ENCODE measurements at regions of chr10 and their contacts with region 1.

Region 1: GRCh38 chr10:128011175-128011979 is 104.5 kb downstream of the PTPRE start:
- DNase-seq: peak; percentile 67 to 95 (median 86)

Region 2: DNA sequence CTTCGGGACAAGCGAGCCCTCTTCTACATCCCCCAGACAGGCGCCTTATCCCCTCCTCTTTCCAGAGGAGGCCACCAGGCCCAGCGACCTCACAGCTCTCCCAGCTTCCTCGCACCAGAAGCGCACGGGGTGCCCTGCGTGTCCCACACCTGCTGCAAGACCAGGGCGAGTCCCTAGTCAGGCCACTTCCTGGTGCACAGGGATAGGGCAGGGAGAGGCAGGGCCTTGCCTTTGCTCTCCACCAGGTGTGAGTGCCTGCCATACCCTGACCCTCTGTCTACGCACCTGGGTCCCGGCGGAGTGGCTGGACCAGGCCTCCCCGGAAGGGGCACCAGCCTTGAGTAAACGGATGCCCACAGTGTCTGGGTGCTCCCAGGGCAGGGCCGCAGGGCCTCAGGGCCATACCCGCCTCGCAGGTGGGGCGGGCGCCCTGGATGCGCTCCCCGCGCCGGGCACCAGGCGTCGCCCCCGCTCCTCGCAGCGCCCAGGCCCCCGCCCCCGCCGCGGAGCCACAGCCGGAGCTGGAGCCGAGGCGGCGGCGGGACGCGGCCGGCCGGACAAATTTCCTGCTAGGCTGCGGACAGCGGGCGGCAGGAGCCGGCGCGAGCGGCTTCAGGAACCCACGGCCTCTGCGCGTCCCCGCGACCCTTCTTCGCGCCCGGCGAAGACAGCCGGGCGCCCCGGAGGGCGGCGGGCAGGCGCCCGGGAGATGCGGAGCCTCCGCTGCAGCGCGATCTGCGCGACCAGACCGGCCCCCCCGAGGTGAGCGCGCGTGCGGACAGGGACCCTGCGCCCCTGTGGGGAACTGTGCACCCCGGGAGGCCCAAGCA is 104.6 kb before region 1 on chr10 and contains the start of gene PTPRE:
- intact Hi-C with region 1: loop called (anchors 2 kb)
- DNase-seq: peak in 40 of 42 donors; percentile 47 to 86 (median 71)

Region 3: DNA sequence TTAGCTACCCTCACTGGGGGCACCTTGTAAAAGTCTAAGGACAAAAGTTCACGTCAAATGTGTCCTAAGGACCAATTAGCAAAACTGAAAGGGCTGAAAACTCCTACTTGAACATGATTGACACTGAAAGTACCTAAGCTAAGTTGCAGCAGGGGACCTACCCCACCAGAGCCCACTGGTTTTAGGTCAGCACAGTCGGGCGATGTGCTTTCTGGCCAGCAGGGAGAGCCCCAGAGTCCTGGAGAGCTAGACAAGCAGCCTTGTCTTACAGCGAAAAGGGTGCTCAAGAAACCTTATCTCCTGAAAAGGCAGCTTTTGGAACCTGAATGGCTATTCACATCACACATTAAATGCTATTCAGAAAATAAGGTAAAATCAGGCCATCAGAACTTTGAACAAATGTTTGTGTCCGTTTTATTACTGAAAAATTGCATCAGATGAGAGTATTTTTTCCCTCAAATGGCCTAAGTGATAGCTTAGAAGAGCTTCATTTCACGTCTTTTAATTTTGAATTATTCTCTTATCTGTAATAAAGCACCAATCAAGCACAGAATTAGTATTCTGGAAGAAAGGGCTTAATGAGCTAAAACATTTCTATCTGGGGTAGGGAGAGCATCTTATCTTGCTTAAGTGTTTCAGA is 167.1 kb after region 1 on chr10:
- intact Hi-C with region 1: no loop called
- DNase-seq: peak in 2 of 42 donors; percentile 7 to 17